ENCODE measurements at regions of chr2 and their contacts with region 1.

Region 1: GRCh38 chr2:236180831-236181453 is 12.8 kb upstream of the GBX2 start:
- DNase-seq: no peak
- ATAC-seq: no peak
- H3K4me3 ChIP-seq: no peak overlapping the region
- H3K4me3 Mint-ChIP-seq: peak overlapping the region in 1 of 10 donors; percentile 19
- H3K27ac ChIP-seq: no peak overlapping the region
- H3K27ac Mint-ChIP-seq: peak overlapping the region in 1 of 9 donors; percentile 84
- H3K4me1 ChIP-seq: no peaks in the 10 kb centered on the region
- H3K4me1 Mint-ChIP-seq: peaks cover 5 to 16% (median 13%) of the 10 kb centered on the region in 7 donors
- H3K27me3 ChIP-seq: peaks cover 6 to 15% of the 10 kb centered on the region in 2 donors
- H3K27me3 Mint-ChIP-seq: peaks cover 57 to 91% (median 71%) of the 10 kb centered on the region in 5 donors

Region 2: DNA sequence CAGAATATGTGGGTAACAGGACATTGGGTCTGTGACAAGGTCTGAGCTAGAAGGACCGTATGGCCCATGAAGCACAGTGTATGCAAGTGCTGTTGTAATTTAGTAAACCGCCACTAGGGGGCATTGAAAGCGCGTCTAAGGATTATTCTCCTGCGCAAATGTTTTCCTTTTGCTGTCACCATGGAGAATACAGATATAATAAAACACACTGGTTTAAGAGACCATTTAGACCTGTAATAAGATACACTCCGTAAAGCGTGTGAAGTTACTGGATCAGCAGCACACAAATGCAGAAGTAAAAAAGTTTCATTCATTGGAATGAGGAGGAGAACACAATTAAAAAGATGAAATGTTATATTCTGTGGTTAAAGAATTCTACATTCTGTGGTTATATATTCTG is 414.7 kb before region 1 on chr2:
- CTCF ChIA-PET with region 1: no interaction called
- POLR2A ChIA-PET with region 1: no interaction called
- intact Hi-C with region 1: loop called in 1 of 2 experiments (anchors 1 kb)
- DNase-seq: peak in 7 of 9 donors; percentile 29 to 57 (median 38)
- ATAC-seq: peak; percentile 74
- H3K4me3 ChIP-seq: no peak overlapping the region
- H3K4me3 Mint-ChIP-seq: no peak overlapping the region
- H3K27ac ChIP-seq: no peak overlapping the region
- H3K27ac Mint-ChIP-seq: no peak overlapping the region
- H3K4me1 ChIP-seq: no peaks in the 10 kb centered on the region
- H3K4me1 Mint-ChIP-seq: peaks cover 0 to 4% (median 0%) of the 10 kb centered on the region in 7 donors
- H3K27me3 ChIP-seq: no peaks in the 10 kb centered on the region
- H3K27me3 Mint-ChIP-seq: peaks cover 0 to 13% (median 5%) of the 10 kb centered on the region in 5 donors

Region 3: DNA sequence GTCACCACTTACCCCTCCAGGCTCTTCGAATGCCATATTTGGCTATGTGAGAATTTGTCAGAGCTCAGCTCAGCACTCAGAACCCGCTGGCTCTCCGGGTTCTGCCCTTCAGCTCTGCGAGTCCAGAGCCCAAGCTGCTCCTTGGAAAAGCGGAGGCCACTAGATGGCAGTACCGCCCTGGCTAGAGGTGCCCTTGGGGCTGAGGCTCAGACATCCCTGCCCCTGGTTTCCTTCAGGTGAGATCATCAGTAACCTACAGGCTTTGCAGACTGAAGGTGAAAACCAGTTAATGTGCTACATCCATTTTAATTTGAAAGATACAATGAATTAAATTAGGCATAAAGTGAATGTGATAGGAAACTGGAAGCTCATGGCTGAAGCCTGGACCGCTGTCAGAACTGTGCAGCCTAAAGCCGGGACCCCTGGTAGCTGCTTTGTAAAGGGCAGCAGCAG is 401.5 kb before region 1 on chr2:
- CTCF ChIA-PET with region 1: interaction called, 4 read pairs
- POLR2A ChIA-PET with region 1: no interaction called
- intact Hi-C with region 1: loop called in 1 of 2 experiments (anchors 1 kb)
- DNase-seq: peak in 7 of 9 donors; percentile 9 to 54 (median 21)
- ATAC-seq: peak; percentile 53
- H3K4me3 ChIP-seq: no peak overlapping the region
- H3K4me3 Mint-ChIP-seq: no peak overlapping the region
- H3K27ac ChIP-seq: no peak overlapping the region
- H3K27ac Mint-ChIP-seq: no peak overlapping the region
- H3K4me1 ChIP-seq: no peaks in the 10 kb centered on the region
- H3K4me1 Mint-ChIP-seq: no peaks in the 10 kb centered on the region
- H3K27me3 ChIP-seq: no peaks in the 10 kb centered on the region
- H3K27me3 Mint-ChIP-seq: peaks cover 3 to 41% (median 13%) of the 10 kb centered on the region in 5 donors

Measured in naive thymus-derived CD4-positive, alpha-beta T cell (primary cell).